CD8-positive, alpha-beta T cell (primary cell): ENCODE measurements at regions of chr2 and their contacts with region 1.

Region 1: GRCh38 chr2:216404010-216404618 is 8.2 kb upstream of the SMARCAL1 start:
- DNase-seq: peak in 8 of 9 experiments; percentile 15 to 70 (median 54)
- ATAC-seq: peak; percentile 75
- H3K4me3 ChIP-seq: no peak overlapping the region
- H3K4me3 Mint-ChIP-seq: no peak overlapping the region
- H3K27ac ChIP-seq: no peak overlapping the region
- H3K27ac Mint-ChIP-seq: no peak overlapping the region
- H3K4me1 ChIP-seq: no peaks in the 10 kb centered on the region
- H3K4me1 Mint-ChIP-seq: peaks cover 5% of the 10 kb centered on the region
- H3K27me3 ChIP-seq: no peaks in the 10 kb centered on the region
- H3K27me3 Mint-ChIP-seq: no peaks in the 10 kb centered on the region
- CTCF ChIP-seq: peak; percentile 96

Region 2: DNA sequence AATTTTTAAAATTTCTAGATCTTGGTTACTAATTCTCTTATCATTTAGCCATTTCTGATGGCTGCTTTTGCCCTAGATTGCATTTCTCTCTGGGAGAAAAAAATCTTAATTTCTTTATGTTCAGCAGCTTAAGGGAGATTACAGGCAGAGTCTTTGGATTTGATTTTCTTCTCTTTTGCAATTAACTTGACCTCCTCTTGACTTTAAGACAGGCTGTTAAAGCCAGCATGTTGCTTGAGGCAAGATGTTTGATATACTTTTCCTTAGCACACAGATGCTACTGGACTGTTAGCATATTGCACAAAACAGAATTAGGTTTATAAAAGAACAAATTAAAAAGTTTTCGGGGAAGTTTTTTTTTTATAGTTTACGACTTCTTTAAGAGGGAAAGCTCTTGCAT is 245.0 kb before region 1 on chr2:
- CTCF ChIA-PET with region 1: interaction called, 4 read pairs
- POLR2A ChIA-PET with region 1: no interaction called
- intact Hi-C with region 1: loop called in 1 of 2 experiments (anchors 1 kb)
- DNase-seq: no peak
- ATAC-seq: no peak
- H3K4me3 ChIP-seq: no peak overlapping the region
- H3K4me3 Mint-ChIP-seq: no peak overlapping the region
- H3K27ac ChIP-seq: no peak overlapping the region
- H3K27ac Mint-ChIP-seq: peak overlapping the region; percentile 3
- H3K4me1 ChIP-seq: peaks cover 5% of the 10 kb centered on the region
- H3K4me1 Mint-ChIP-seq: peaks cover 30% of the 10 kb centered on the region
- H3K27me3 ChIP-seq: no peaks in the 10 kb centered on the region
- H3K27me3 Mint-ChIP-seq: no peaks in the 10 kb centered on the region
- CTCF ChIP-seq: no peak

Region 3: GRCh38 chr2:216328347-216328746 is 75.8 kb before region 1 on chr2:
- CTCF ChIA-PET with region 1: interaction called, 34 read pairs
- POLR2A ChIA-PET with region 1: no interaction called
- intact Hi-C with region 1: loop called (anchors 1 kb)
- DNase-seq: peak in 2 of 9 experiments; percentile 44 to 50
- ATAC-seq: no peak
- H3K4me3 ChIP-seq: no peak overlapping the region
- H3K4me3 Mint-ChIP-seq: no peak overlapping the region
- H3K27ac ChIP-seq: no peak overlapping the region
- H3K27ac Mint-ChIP-seq: no peak overlapping the region
- H3K4me1 ChIP-seq: no peaks in the 10 kb centered on the region
- H3K4me1 Mint-ChIP-seq: peaks cover 2% of the 10 kb centered on the region
- H3K27me3 ChIP-seq: no peaks in the 10 kb centered on the region
- H3K27me3 Mint-ChIP-seq: no peaks in the 10 kb centered on the region
- CTCF ChIP-seq: no peak

Region 4: DNA sequence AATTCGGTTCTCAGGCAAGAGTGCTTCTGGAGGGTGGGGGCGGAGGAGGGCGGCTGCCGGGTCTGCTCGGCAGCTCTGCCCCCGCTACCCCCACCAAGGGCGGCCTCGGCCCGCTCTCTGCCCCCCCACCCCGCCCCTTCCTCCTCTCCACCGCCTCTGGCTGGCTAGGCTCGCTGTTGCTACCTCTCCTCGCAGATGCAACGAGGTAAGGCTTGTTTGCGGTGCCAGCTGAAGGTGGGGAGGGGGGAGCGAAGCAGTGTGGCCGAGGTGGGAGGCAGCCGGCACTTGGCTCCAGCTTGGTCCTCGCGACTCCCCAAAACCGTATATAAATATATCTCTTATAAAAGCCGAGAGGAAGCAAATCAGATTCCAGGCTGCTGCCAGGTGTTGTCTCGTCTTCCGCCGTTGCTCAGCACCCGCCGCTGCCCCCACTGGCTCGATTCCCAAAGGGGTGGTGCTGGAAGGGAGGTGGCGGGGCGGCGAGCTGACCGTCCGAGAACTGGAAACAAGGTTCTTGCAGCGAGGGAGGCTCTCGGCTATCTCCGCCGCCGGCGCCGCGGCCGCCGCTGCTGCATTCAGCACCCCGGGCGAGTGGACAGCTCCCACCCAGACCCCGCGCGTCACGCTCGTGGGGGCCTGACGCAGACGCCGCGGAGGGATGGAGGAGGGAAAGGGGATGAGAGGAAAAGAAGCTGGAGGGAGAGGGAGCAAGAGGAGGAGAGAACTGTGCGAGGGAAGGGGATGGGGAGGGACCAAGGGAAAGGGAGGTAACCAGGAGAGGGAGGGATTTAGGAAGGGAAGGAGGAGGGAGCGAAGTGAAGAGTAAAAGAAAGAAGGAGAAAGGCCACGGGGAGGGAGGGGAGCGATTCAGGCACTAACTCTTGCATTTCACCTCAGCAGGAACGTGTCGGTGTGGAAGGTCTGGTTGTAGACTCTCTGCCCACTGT is 32.1 kb before region 1 on chr2 and contains the start of gene MARCHF4:
- CTCF ChIA-PET with region 1: interaction called, 12 read pairs
- POLR2A ChIA-PET with region 1: no interaction called
- intact Hi-C with region 1: no loop called
- DNase-seq: peak; percentile 46 to 82 (median 73)
- ATAC-seq: peak; percentile 98
- H3K4me3 ChIP-seq: no peak within 1 kb of the TSS
- H3K4me3 Mint-ChIP-seq: peak within 1 kb of the TSS; percentile 16
- H3K27ac ChIP-seq: no peak within 1 kb of the TSS
- H3K27ac Mint-ChIP-seq: no peak within 1 kb of the TSS
- H3K4me1 ChIP-seq: peaks cover 16% of the 10 kb centered on the region
- H3K4me1 Mint-ChIP-seq: peaks cover 15% of the 10 kb centered on the region
- H3K27me3 ChIP-seq: peaks cover 20 to 23% of the 10 kb centered on the region in 2 experiments
- H3K27me3 Mint-ChIP-seq: peaks cover 49% of the 10 kb centered on the region
- CTCF ChIP-seq: no peak
- total RNA-seq, gene MARCHF4: not detected